ENCODE measurements at regions of chr6 and their contacts with region 1.

Region 1: DNA sequence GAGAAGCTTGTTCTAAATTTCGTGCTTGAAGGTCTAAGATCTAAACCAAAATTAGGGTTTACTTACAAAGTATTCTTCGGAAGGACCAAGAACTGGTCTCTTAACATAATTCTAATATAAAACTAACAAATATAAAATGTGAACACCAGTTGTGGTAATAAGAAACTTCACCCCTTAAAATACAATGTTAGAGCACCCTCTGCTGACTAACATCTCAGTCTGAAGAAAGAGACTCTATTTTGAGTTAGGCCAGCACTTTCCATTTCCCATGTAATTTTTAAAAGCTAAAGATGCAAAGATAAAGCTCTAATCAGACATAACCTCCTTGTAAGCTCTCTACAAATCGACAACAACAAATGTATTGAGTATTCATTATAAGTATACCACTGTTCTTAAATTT is 24.6 kb downstream of the ATG5 start:
- DNase-seq: peak; percentile 21
- H3K4me3 ChIP-seq: no peak overlapping the region
- H3K27ac ChIP-seq: no peak overlapping the region
- H3K27me3 ChIP-seq: no peaks in the 10 kb centered on the region
- CTCF ChIP-seq: peak; percentile 62

Region 2: GRCh38 chr6:105431226-105431625 is 869.7 kb before region 1 on chr6:
- CTCF ChIA-PET with region 1: interaction called, 59 read pairs
- POLR2A ChIA-PET with region 1: no interaction called
- DNase-seq: peak; percentile 15
- H3K4me3 ChIP-seq: no peak overlapping the region
- H3K27ac ChIP-seq: no peak overlapping the region
- H3K27me3 ChIP-seq: no peaks in the 10 kb centered on the region
- CTCF ChIP-seq: peak; percentile 58

Region 3: DNA sequence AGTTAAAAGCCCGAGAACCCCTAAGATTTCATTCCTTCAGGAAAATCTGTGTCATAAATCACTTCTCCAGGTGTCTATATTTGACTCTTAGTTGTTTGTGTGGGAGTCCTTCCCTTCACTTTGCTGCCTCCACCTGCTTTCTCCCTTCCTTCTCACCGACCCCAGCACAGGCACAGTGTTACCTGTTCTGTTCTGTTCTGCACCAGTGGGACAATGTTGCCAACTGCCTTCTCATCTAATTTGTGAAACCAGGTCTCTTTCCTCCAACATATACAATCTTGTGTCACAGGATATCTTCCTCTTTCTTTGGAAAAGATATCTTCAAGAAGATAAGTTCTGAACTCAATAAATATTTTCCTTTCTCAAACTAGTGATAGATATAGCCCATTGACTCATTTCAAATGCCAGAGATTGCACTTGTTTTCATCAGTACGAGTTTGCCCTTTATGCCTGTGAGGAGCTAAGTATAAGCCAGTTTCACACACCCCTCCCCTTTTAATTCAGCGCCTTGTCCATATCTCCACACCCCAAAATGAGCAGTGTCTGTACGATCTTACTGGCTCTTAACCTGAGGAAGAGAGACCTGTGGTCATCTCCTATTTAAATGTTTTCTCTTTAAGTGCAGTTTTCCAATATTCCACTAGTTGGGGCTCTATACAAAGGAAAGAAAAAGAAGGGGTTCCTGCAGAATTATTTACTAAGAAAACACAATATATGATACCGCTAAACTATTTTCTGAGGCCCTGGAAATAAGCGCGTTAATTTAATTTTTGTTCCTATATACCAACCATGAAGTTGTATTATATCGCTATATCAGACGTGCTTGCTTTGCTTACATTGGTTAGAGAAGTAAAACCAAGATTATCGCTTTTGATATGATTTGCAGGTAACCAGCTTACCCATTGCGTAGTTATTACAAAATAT is 816.4 kb before region 1 on chr6:
- CTCF ChIA-PET with region 1: interaction called, 26 read pairs
- POLR2A ChIA-PET with region 1: no interaction called
- DNase-seq: no peak
- H3K4me3 ChIP-seq: no peak overlapping the region
- H3K27ac ChIP-seq: no peak overlapping the region
- H3K27me3 ChIP-seq: no peaks in the 10 kb centered on the region
- CTCF ChIP-seq: peak; percentile 94

Region 4: DNA sequence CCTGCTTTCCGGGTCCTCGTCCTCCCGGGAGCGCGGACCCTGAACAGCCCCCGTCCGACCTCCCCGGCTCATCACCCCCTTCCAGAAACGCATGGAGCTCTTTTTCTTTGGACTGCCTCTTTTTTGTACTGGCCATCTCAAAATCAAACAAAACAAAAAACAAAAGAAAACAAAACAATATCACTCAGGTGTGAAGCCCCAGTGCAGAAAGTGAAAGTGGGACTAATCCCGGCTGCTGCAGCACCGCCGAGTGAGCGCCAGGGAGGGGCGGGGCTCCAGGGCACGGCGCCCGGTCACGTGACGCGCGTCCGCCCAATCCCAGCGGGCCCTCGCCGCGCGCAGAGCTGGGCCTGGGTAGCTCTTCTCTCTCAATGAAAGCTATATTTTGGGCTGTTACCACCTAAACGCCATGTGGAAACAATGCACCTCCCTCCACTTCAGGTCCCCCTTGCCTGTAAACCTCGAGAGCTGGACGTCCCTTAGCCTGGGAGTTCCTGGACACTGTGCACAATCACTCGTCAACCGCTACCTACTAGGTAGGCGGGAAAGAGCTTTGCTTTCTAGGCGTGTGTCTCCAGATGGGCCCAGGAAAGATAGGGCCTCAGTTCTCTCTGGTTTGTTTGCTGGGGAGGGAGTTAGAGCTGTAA is 308.5 kb before region 1 on chr6:
- CTCF ChIA-PET with region 1: interaction called, 13 read pairs
- POLR2A ChIA-PET with region 1: no interaction called
- DNase-seq: no peak
- H3K4me3 ChIP-seq: peak overlapping the region; percentile 75
- H3K27ac ChIP-seq: no peak overlapping the region
- H3K27me3 ChIP-seq: no peaks in the 10 kb centered on the region
- CTCF ChIP-seq: no peak

Region 5: DNA sequence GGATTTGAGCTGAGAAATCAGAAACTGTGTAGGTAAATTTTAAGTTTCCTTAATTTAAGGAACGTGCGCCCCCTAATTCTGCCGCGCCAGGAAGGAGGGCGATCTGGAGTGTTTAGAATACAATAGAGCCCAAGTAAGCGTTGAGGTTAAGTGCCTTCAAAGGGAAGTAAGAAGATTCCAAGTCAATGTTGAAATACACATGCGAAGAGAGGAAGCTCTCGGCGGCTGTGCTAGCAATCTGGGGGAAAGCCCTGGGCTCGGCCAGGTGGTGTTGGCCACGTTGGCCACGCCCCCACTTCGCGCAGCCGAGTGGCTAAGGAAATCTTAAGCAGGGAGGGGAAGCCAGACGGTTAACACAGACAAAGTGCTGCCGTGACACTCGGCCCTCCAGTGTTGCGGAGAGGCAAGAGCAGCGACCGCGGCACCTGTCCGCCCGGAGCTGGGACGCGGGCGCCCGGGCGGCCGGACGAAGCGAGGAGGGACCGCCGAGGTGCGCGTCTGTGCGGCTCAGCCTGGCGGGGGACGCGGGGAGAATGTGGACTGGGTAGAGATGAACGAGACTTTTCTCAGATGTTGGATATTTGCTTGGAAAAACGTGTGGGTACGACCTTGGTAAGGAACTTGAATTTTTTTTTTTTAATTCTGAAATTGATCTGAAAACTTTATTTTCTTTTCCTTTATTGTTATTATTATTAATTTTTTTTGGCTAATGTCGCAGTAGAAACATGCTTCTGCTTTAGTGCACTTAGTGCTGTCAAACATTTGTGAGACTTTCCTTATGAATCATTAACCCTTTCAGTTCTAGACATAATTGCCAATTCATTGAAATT is 214.7 kb before region 1 on chr6 and contains the start of gene PRDM1:
- CTCF ChIA-PET with region 1: interaction called, 39 read pairs
- POLR2A ChIA-PET with region 1: interaction called, 4 read pairs
- DNase-seq: no peak
- H3K4me3 ChIP-seq: peak within 1 kb of the TSS; percentile 74
- H3K27ac ChIP-seq: peak within 1 kb of the TSS; percentile 77
- H3K27me3 ChIP-seq: no peaks in the 10 kb centered on the region
- CTCF ChIP-seq: peak; percentile 17; the same call in 1 of the 2 replicates
- polyA plus RNA-seq, gene PRDM1: 3.4 and 3.7 TPM in 2 replicates

Region 6: GRCh38 chr6:106092279-106092678 is 208.7 kb before region 1 on chr6:
- CTCF ChIA-PET with region 1: interaction called, 39 read pairs
- POLR2A ChIA-PET with region 1: interaction called, 4 read pairs
- DNase-seq: no peak
- H3K4me3 ChIP-seq: no peak overlapping the region
- H3K27ac ChIP-seq: no peak overlapping the region
- H3K27me3 ChIP-seq: no peaks in the 10 kb centered on the region
- CTCF ChIP-seq: no peak

Measured in AG04450 (cell line).